Activated CD4-positive, alpha-beta T cell treated with anti-CD3 and anti-CD28 coated beads for 36 hours (primary cell): ENCODE measurements at regions of chr22 and their contacts with region 1.

Region 1: GRCh38 chr22:49960159-49961004 is at the start of gene PIM3:
- DNase-seq: peak; percentile 94
- ATAC-seq: peak; percentile 79
- H3K4me3 Mint-ChIP-seq: peak within 1 kb of the TSS; percentile 93
- H3K27ac Mint-ChIP-seq: peak within 1 kb of the TSS; percentile 93
- H3K4me1 Mint-ChIP-seq: peaks cover 25% of the 10 kb centered on the region
- H3K27me3 Mint-ChIP-seq: no peaks in the 10 kb centered on the region
- total RNA-seq, gene PIM3: 127 to 165 TPM

Region 2: DNA sequence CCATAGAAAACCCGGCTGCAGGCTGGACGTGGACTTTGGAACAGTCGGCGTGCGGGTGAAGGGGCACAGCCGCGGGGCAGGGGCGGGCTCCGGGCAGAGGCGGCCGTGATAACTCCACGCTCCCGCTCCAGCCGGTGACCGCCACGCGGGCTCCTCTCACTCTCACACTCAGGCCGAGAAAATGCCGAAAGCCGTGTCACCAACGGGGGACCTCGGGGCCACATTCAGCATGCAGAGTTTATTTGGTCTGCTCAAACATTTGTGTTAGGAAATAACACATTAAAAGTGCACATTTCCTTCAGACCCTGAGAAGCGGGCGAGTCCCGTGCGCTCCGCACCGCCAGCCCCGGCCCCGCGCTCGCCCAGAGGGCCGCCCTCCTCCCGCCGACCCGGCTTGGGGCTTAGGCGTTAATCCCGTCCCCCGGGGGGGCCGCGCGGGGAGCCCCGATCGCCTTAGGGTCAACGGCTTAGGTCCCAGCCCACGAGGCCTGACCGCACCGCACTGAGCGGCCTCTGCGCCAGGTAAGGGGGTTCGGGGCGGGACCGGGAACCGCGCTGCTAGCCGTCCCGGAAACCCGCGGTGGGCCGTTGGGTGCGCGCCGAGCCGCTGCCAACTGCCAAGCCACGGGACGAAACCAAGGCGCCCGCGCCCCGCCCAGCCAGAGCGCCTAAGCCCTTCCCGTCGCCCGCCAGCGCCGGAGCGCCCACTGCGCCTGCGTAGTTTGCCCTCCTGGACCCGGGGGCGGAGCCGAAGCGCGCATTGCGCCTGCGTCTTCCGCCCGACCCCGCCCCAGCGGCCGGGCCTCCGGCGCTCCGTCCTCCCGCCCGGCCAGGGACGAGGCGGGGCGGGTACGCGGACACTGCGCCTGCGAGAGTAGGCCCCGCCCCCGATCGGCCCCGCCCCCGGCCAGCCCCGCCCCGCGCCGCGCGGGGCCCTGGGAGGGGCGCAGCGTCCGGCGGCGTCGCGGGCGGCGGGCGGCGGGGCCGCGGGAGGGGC is 107.2 kb before region 1 on chr22 and contains the start of gene ZBED4:
- CTCF ChIA-PET with region 1: no interaction called
- POLR2A ChIA-PET with region 1: no interaction called
- intact Hi-C with region 1: loop called in 1 of 2 experiments (anchors 1 kb)
- DNase-seq: peak; percentile 99
- ATAC-seq: peak; percentile 88
- H3K4me3 Mint-ChIP-seq: peak within 1 kb of the TSS; percentile 96
- H3K27ac Mint-ChIP-seq: peak within 1 kb of the TSS; percentile 87
- H3K4me1 Mint-ChIP-seq: peaks cover 36% of the 10 kb centered on the region
- H3K27me3 Mint-ChIP-seq: peaks cover 8% of the 10 kb centered on the region
- total RNA-seq, gene ZBED4: 17.3 to 17.4 TPM

Region 3: DNA sequence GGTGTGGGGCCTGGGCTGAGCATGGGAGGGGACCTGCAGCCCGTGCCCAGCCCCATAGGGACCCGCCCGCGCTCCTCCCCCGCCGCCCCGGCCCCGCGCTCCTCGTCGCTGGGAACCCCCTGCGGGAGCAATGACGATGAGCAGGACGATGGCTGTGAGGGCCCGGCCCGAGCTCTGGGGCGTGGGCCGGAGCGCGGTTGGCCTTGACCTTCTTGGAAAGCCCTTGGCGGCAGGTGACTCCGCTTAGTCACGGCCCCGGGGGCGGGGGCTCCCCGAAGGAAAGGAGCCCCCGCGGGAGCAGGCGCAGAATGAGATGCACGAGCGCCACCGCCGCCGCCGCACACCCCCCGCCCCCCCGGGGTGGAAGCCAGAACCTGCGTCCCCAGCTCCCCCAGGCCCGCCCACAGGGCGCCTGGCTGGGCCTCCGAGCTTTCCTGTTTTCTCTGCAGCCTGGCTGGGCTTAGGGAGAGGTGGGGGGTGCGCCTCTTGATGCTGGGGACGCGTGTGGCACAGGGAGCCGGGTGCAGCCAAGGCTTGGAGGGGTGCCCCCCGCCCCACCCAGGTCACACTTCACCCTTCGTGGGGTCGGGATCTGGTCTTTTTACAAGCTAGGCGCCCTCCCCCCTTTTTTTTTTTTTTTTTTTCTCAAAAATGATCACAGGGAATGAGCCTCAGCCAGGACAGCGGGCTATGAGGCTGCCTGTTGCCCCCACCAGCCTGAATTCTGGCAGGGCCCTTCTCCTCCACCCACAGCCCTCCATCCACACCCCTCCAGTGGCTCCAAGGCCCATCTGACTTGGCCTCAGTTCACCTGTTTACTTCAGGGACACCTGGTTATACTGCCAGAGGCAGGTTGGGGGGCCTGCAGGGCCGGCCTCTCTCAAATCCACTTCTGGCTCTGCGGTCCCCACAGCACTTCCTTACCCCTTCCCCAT is 24.1 kb before region 1 on chr22:
- CTCF ChIA-PET with region 1: interaction called, 19 read pairs
- POLR2A ChIA-PET with region 1: interaction called, 46 read pairs
- intact Hi-C with region 1: loop called (anchors 1 kb)
- DNase-seq: peak; percentile 99
- ATAC-seq: peak; percentile 84
- H3K4me3 Mint-ChIP-seq: peak overlapping the region; percentile 64
- H3K27ac Mint-ChIP-seq: peak overlapping the region; percentile 85
- H3K4me1 Mint-ChIP-seq: peaks cover 43% of the 10 kb centered on the region
- H3K27me3 Mint-ChIP-seq: no peaks in the 10 kb centered on the region

Region 4: GRCh38 chr22:50016988-50017700 is 56.8 kb after region 1 on chr22:
- CTCF ChIA-PET with region 1: no interaction called
- POLR2A ChIA-PET with region 1: no interaction called
- intact Hi-C with region 1: loop called in 1 of 2 experiments (anchors 1 kb)
- DNase-seq: peak; percentile 93
- ATAC-seq: peak; percentile 64
- H3K4me3 Mint-ChIP-seq: peak overlapping the region; percentile 60
- H3K27ac Mint-ChIP-seq: peak overlapping the region; percentile 96
- H3K4me1 Mint-ChIP-seq: no peaks in the 10 kb centered on the region
- H3K27me3 Mint-ChIP-seq: no peaks in the 10 kb centered on the region

Region 5: DNA sequence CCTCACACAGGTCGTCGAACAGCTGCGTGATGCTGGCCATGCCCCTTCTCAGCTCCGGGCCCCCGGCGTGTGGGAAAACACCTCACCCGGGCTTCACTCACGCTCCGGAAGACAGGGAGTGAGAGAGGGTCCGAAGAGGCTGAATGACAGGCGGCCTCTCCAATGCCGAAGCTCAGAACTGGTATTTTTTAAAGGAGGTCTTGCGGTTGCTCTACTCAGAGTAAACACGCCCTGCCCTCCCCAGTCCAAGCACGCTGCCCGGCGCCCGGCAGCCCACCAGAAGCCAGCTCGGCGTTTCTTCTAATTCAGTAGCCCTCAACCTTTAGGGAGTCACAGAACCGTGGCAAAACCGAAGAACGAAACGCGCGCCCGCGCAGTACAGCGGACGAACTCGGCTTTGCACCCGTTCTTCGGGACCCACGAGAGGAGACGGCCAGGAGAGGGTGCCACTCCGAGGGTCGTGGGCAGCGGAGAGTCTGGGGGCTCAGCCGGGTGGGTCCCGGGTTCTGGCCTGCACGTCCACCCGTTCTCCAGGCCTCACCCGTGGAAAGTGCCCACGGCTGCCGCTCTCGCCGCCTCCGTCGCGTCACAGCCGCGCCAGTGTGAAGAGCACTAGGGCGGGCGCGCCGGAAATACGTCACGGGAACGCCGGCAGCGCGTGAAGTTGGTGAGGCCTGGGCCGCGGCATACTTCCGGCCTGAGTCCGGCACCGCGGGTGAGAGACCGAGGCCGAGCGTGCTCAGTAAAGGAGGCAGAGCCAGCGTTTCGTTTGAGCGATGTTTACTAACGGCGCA is 284.2 kb after region 1 on chr22 and contains the start of gene TUBGCP6:
- CTCF ChIA-PET with region 1: no interaction called
- POLR2A ChIA-PET with region 1: no interaction called
- intact Hi-C with region 1: loop called in 1 of 2 experiments (anchors 1 kb)
- DNase-seq: peak; percentile 96
- ATAC-seq: peak; percentile 80
- H3K4me3 Mint-ChIP-seq: peak within 1 kb of the TSS; percentile 94
- H3K27ac Mint-ChIP-seq: peak within 1 kb of the TSS; percentile 100
- H3K4me1 Mint-ChIP-seq: peaks cover 23% of the 10 kb centered on the region
- H3K27me3 Mint-ChIP-seq: no peaks in the 10 kb centered on the region
- total RNA-seq, gene TUBGCP6: 42.2 to 49.2 TPM

Region 6: GRCh38 chr22:50507991-50508884 is 547.9 kb after region 1 on chr22 and contains the start of gene NCAPH2:
- CTCF ChIA-PET with region 1: no interaction called
- POLR2A ChIA-PET with region 1: no interaction called
- intact Hi-C with region 1: loop called in 1 of 2 experiments (anchors 2 kb)
- DNase-seq: peak; percentile 99
- ATAC-seq: peak; percentile 79
- H3K4me3 Mint-ChIP-seq: peak within 1 kb of the TSS; percentile 91
- H3K27ac Mint-ChIP-seq: peak within 1 kb of the TSS; percentile 95
- H3K4me1 Mint-ChIP-seq: peaks cover 23% of the 10 kb centered on the region
- H3K27me3 Mint-ChIP-seq: no peaks in the 10 kb centered on the region
- total RNA-seq, gene NCAPH2: 115 to 123 TPM

Region 7: DNA sequence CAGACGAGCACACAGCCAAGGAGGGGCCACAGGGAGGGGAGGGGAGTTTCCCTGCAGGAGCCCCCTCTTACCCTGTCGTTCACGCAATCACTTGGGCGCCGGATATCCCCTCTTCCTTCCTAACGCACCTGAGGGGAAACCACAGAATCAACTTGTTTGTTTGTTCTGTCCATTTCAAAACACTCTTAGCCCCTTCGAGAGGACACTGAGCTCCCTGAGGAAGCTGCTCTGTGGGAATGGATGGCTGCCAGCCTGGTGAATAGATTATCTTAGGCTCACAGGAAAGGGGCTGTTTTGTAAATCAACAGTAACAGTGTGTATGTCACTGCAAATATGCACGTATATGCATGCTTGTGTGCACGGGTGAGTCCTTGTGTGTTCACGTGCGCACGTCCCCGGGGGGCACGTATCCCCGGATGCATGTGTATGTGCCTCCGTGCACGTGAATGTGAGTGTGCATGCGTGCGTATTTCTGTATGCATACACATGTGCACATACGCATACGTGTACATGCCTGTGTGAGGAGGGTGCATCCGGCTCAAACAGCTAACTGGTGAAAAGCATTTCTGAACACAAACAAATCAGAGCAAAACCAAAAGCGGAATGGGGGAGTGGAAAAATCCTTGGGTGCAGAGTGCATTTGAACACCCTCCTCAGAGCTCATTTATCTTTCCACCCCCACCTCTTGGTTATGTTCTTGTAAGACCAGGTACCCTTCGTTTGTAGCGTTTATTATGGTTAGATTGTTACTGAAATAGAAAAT is 660.4 kb after region 1 on chr22:
- CTCF ChIA-PET with region 1: no interaction called
- POLR2A ChIA-PET with region 1: no interaction called
- intact Hi-C with region 1: loop called in 1 of 2 experiments (anchors 5 kb)
- DNase-seq: peak; percentile 87
- ATAC-seq: peak; percentile 70
- H3K4me3 Mint-ChIP-seq: peak overlapping the region; percentile 80
- H3K27ac Mint-ChIP-seq: peak overlapping the region; percentile 97
- H3K4me1 Mint-ChIP-seq: peaks cover 40% of the 10 kb centered on the region
- H3K27me3 Mint-ChIP-seq: no peaks in the 10 kb centered on the region